HepG2 (cell line): ENCODE measurements at regions of chr22 and their contacts with region 1.

Region 1: DNA sequence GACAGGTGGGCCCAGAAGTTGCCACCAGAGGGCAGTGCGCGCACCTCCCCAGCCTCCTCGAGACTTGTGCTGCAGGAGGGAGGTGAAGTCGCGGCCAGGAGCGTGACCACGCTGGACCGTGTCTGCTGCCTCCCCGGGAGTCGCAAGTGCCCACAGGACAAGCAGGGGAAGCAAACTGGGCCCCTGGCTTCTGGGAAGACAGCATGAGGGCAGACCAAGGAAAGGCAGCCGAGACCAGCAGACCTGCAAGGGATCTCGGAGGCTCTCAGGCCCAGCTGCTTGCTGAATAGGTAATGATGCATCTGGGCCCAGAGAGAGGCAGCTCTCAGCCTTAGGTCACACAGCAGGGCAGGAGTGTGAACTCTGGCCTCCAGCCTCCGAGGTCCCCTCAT is 17.0 kb upstream of the IL2RB start:
- DNase-seq: peak; percentile 42
- ATAC-seq: peak; percentile 87
- H3K4me3 ChIP-seq: peak overlapping the region in 1 of 3 experiments; percentile 44; a peak in 1 of 6 replicates
- H3K27ac ChIP-seq: no peak overlapping the region
- H3K4me1 ChIP-seq: peaks cover 42% of the 10 kb centered on the region
- H3K27me3 ChIP-seq: peaks cover 6 to 18% of the 10 kb centered on the region in 2 experiments; a peak in 3 of 5 replicates
- CTCF ChIP-seq: peak; percentile 96
- EP300 ChIP-seq: no peak
- POLR2A ChIP-seq: no peak
- RAD21 ChIP-seq: peak; percentile 81

Region 2: GRCh38 chr22:37148742-37149665 is 17.7 kb before region 1 on chr22:
- CTCF ChIA-PET with region 1: no interaction called
- POLR2A ChIA-PET with region 1: no interaction called
- in situ Hi-C with region 1: no loop called
- intact Hi-C with region 1: no loop called
- DNase-seq: no peak
- ATAC-seq: no peak
- H3K4me3 ChIP-seq: no peak overlapping the region
- H3K27ac ChIP-seq: no peak overlapping the region
- H3K4me1 ChIP-seq: 0 out of 2 replicates have a peak, but pooled peaks cover 15% of the 10 kb centered on the region
- H3K27me3 ChIP-seq: peaks cover 5 to 30% of the 10 kb centered on the region in 2 experiments
- CTCF ChIP-seq: no peak
- EP300 ChIP-seq: no peak
- POLR2A ChIP-seq: no peak
- RAD21 ChIP-seq: no peak

Region 3: GRCh38 chr22:37260901-37261336 is 94.2 kb after region 1 on chr22:
- CTCF ChIA-PET with region 1: interaction called, 10 read pairs
- POLR2A ChIA-PET with region 1: no interaction called
- in situ Hi-C with region 1: no loop called
- intact Hi-C with region 1: no loop called
- DNase-seq: peak; percentile 25
- ATAC-seq: peak; percentile 83
- H3K4me3 ChIP-seq: no peak overlapping the region
- H3K27ac ChIP-seq: no peak overlapping the region
- H3K4me1 ChIP-seq: no peaks in the 10 kb centered on the region
- H3K27me3 ChIP-seq: peaks cover 0 to 19% of the 10 kb centered on the region in 2 experiments; a peak in 3 of 5 replicates
- CTCF ChIP-seq: peak; percentile 87
- EP300 ChIP-seq: no peak
- POLR2A ChIP-seq: no peak
- RAD21 ChIP-seq: peak; percentile 15; the same call in 1 of the 2 replicates